Mammary epithelial cell (primary cell): ENCODE measurements at regions of chr18 and their contacts with region 1.

Region 1: GRCh38 chr18:48022531-48023329 is 92.3 kb upstream of the SMAD2 start:
- DNase-seq: peak; percentile 67
- H3K4me3 ChIP-seq: no peak overlapping the region
- H3K27ac ChIP-seq: peak overlapping the region; percentile 33
- H3K4me1 ChIP-seq: peaks cover 29% of the 10 kb centered on the region
- H3K27me3 ChIP-seq: no peaks in the 10 kb centered on the region
- CTCF ChIP-seq: peak; percentile 58 to 70

Region 2: GRCh38 chr18:47215554-47216138 is 807.1 kb before region 1 on chr18:
- CTCF ChIA-PET with region 1: no interaction called
- dilution Hi-C with region 1: no loop called
- in situ Hi-C with region 1: no loop called
- intact Hi-C with region 1: loop called (anchors 5 kb)
- DNase-seq: peak; percentile 39
- H3K4me3 ChIP-seq: no peak overlapping the region
- H3K27ac ChIP-seq: no peak overlapping the region
- H3K4me1 ChIP-seq: no peaks in the 10 kb centered on the region
- H3K27me3 ChIP-seq: no peaks in the 10 kb centered on the region
- CTCF ChIP-seq: peak; percentile 63 to 81

Region 3: GRCh38 chr18:47772374-47773248 is 250.1 kb before region 1 on chr18:
- CTCF ChIA-PET with region 1: interaction called, 4 read pairs
- dilution Hi-C with region 1: no loop called
- in situ Hi-C with region 1: loop called (anchors 5 kb)
- intact Hi-C with region 1: loop called (anchors 1 kb)
- DNase-seq: peak; percentile 80
- H3K4me3 ChIP-seq: no peak overlapping the region
- H3K27ac ChIP-seq: no peak overlapping the region
- H3K4me1 ChIP-seq: peaks cover 4% of the 10 kb centered on the region
- H3K27me3 ChIP-seq: no peaks in the 10 kb centered on the region
- CTCF ChIP-seq: peak; percentile 92

Region 4: GRCh38 chr18:47870605-47871004 is 152.1 kb before region 1 on chr18:
- CTCF ChIA-PET with region 1: no interaction called
- dilution Hi-C with region 1: no loop called
- in situ Hi-C with region 1: no loop called
- intact Hi-C with region 1: loop called (anchors 2 kb)
- DNase-seq: peak; percentile 28
- H3K4me3 ChIP-seq: no peak overlapping the region
- H3K27ac ChIP-seq: peak overlapping the region; percentile 40
- H3K4me1 ChIP-seq: peaks cover 10% of the 10 kb centered on the region
- H3K27me3 ChIP-seq: no peaks in the 10 kb centered on the region
- CTCF ChIP-seq: no peak

Region 5: GRCh38 chr18:47930931-47931717 is 91.6 kb before region 1 on chr18:
- CTCF ChIA-PET with region 1: no interaction called
- dilution Hi-C with region 1: no loop called
- in situ Hi-C with region 1: no loop called
- intact Hi-C with region 1: loop called (anchors 1 kb)
- DNase-seq: peak; percentile 97
- H3K4me3 ChIP-seq: peak overlapping the region; percentile 52 to 87 (median 78)
- H3K27ac ChIP-seq: peak overlapping the region; percentile 95
- H3K4me1 ChIP-seq: peaks cover 15% of the 10 kb centered on the region
- H3K27me3 ChIP-seq: no peaks in the 10 kb centered on the region
- CTCF ChIP-seq: no peak

Region 6: GRCh38 chr18:48470484-48471180 is 447.9 kb after region 1 on chr18:
- CTCF ChIA-PET with region 1: no interaction called
- dilution Hi-C with region 1: no loop called
- in situ Hi-C with region 1: no loop called
- intact Hi-C with region 1: loop called (anchors 1 kb)
- DNase-seq: no peak
- H3K4me3 ChIP-seq: no peak overlapping the region
- H3K27ac ChIP-seq: no peak overlapping the region
- H3K4me1 ChIP-seq: no peaks in the 10 kb centered on the region
- H3K27me3 ChIP-seq: no peaks in the 10 kb centered on the region
- CTCF ChIP-seq: no peak